GM12878 (cell line): ENCODE measurements at regions of chr7 and their contacts with region 1.

Region 1: GRCh38 chr7:87933945-87934698 is at the start of gene ADAM22:
- DNase-seq: peak; percentile 83
- ATAC-seq: peak; percentile 94
- H3K4me3 ChIP-seq: peak within 1 kb of the TSS; percentile 71
- H3K27ac ChIP-seq: peak within 1 kb of the TSS; percentile 60
- H3K4me1 ChIP-seq: no peaks in the 10 kb centered on the region; the same call in 1 of the 2 replicates
- H3K27me3 ChIP-seq: no peaks in the 10 kb centered on the region
- CTCF ChIP-seq: peak; percentile 14 to 46 (median 16); a peak in 3 of 6 replicates
- EP300 ChIP-seq: peak; percentile 16 to 57; a peak in 1 of 4 replicates
- POLR2A ChIP-seq: peak; percentile 97
- RAD21 ChIP-seq: peak; percentile 19; the same call in 1 of the 2 replicates
- polyA plus RNA-seq, gene ADAM22: 1.4 TPM

Region 2: GRCh38 chr7:87658553-87658952 is 275.6 kb before region 1 on chr7:
- CTCF ChIA-PET with region 1: no interaction called
- POLR2A ChIA-PET with region 1: no interaction called
- RAD21 ChIA-PET with region 1: no interaction called
- SMC1A ChIA-PET with region 1: no interaction called
- in situ Hi-C with region 1: no loop called
- intact Hi-C with region 1: no loop called
- DNase-seq: no peak
- ATAC-seq: no peak
- H3K4me3 ChIP-seq: no peak overlapping the region
- H3K27ac ChIP-seq: no peak overlapping the region
- H3K4me1 ChIP-seq: no peaks in the 10 kb centered on the region
- H3K27me3 ChIP-seq: no peaks in the 10 kb centered on the region
- CTCF ChIP-seq: no peak
- EP300 ChIP-seq: no peak
- POLR2A ChIP-seq: no peak
- RAD21 ChIP-seq: no peak

Region 3: DNA sequence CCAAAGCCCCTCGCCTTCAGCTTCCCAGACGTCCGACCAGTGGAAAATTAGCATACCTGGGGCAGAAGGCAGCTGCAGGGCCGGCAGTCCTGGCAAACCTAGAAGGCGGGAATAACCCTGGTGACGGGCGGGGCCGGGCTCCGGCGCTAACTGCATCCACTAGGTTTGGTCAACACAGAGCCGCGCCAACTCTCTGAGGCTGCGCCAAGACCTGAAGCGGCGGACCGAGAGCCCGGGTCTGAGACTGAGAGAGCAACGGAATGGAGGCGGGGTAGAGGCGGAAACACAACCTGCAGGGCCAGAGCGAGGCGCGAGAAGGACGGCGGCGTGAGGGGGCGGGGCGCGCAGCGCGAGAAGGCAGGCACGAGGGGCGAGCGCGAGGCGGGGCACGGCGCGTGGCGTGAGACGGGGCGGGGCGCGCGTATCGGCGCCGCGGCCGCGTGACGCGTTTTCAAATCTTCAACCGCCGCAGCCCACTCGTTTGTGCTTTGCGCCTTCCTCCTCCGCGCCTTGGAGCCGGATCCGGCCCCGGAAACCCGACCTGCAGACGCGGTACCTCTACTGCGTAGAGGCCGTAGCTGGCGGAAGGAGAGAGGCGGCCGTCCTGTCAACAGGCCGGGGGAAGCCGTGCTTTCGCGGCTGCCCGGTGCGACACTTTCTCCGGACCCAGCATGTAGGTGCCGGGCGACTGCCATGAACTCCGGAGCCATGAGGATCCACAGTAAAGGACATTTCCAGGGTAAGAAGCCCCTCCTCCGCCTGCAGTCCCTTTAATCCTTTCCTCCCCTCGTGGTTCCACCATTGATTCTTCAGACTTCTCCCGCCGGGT is 57.9 kb before region 1 on chr7 and contains the starts of genes DBF4 and SLC25A40:
- CTCF ChIA-PET with region 1: no interaction called
- POLR2A ChIA-PET with region 1: interaction called, 20 read pairs
- RAD21 ChIA-PET with region 1: interaction called, 10 read pairs
- SMC1A ChIA-PET with region 1: interaction called, 8 read pairs
- in situ Hi-C with region 1: no loop called
- intact Hi-C with region 1: no loop called
- DNase-seq: peak; percentile 86
- ATAC-seq: peak; percentile 86
- H3K4me3 ChIP-seq: peak within 1 kb of the TSS; percentile 88
- H3K27ac ChIP-seq: peak within 1 kb of the TSS; percentile 92
- H3K4me1 ChIP-seq: no peaks in the 10 kb centered on the region
- H3K27me3 ChIP-seq: no peaks in the 10 kb centered on the region
- CTCF ChIP-seq: no peak
- EP300 ChIP-seq: peak in 1 of 2 experiments; percentile 34; a peak in 1 of 4 replicates
- POLR2A ChIP-seq: peak; percentile 91
- RAD21 ChIP-seq: no peak
- polyA plus RNA-seq, gene DBF4: 46.1 to 47.0 TPM
- polyA plus RNA-seq, gene SLC25A40: 15.8 to 17.4 TPM

Region 4: GRCh38 chr7:87944531-87944930 is 10.4 kb after region 1 on chr7:
- CTCF ChIA-PET with region 1: interaction called, 10 read pairs
- POLR2A ChIA-PET with region 1: interaction called, 18 read pairs
- RAD21 ChIA-PET with region 1: interaction called, 10 read pairs
- SMC1A ChIA-PET with region 1: interaction called, 26 read pairs
- in situ Hi-C with region 1: no loop called
- intact Hi-C with region 1: no loop called
- DNase-seq: no peak
- ATAC-seq: peak; percentile 77
- H3K4me3 ChIP-seq: no peak overlapping the region
- H3K27ac ChIP-seq: no peak overlapping the region; the same call in 1 of the 2 replicates
- H3K4me1 ChIP-seq: peaks cover 6% of the 10 kb centered on the region; the same call in 1 of the 2 replicates
- H3K27me3 ChIP-seq: no peaks in the 10 kb centered on the region
- CTCF ChIP-seq: no peak
- EP300 ChIP-seq: no peak
- POLR2A ChIP-seq: no peak
- RAD21 ChIP-seq: no peak

Region 5: DNA sequence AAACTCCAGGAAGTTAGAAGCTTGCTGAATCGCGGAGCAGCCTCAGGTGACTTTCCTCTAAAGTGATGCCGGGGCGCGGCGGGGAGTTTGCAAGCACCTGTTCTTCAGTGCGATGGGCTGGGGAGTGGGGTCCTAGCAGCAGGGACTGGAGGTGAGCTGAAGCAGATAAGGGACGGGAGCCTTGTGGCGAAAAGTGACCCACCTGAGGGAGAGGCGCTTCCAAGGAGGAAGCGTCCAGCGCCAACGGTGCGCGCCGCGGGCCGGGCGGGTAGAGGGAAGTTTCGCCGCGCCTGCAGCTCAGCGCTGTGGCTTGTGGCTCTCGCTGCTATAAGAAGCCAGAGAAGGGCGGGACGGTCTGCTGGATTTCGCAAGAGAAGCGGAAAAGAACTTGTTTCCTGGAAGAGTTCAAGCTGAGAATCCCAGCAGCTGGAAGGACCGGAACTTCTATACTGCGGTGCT is 372.5 kb after region 1 on chr7 and contains the start of gene STEAP4:
- CTCF ChIA-PET with region 1: no interaction called
- POLR2A ChIA-PET with region 1: no interaction called
- RAD21 ChIA-PET with region 1: no interaction called
- SMC1A ChIA-PET with region 1: no interaction called
- in situ Hi-C with region 1: no loop called
- intact Hi-C with region 1: no loop called
- DNase-seq: no peak
- ATAC-seq: peak; percentile 27; the same call in 1 of the 3 replicates
- H3K4me3 ChIP-seq: no peak within 1 kb of the TSS
- H3K27ac ChIP-seq: no peak within 1 kb of the TSS
- H3K4me1 ChIP-seq: no peaks in the 10 kb centered on the region
- H3K27me3 ChIP-seq: peaks cover 0 to 9% of the 10 kb centered on the region in 2 experiments; a peak in 1 of 4 replicates
- CTCF ChIP-seq: no peak
- EP300 ChIP-seq: no peak
- POLR2A ChIP-seq: no peak
- RAD21 ChIP-seq: no peak
- polyA plus RNA-seq, gene STEAP4: not detected